Adrenal gland (tissue), 19 donors: ENCODE measurements at regions of chr10 and their contacts with region 1.

Region 1: DNA sequence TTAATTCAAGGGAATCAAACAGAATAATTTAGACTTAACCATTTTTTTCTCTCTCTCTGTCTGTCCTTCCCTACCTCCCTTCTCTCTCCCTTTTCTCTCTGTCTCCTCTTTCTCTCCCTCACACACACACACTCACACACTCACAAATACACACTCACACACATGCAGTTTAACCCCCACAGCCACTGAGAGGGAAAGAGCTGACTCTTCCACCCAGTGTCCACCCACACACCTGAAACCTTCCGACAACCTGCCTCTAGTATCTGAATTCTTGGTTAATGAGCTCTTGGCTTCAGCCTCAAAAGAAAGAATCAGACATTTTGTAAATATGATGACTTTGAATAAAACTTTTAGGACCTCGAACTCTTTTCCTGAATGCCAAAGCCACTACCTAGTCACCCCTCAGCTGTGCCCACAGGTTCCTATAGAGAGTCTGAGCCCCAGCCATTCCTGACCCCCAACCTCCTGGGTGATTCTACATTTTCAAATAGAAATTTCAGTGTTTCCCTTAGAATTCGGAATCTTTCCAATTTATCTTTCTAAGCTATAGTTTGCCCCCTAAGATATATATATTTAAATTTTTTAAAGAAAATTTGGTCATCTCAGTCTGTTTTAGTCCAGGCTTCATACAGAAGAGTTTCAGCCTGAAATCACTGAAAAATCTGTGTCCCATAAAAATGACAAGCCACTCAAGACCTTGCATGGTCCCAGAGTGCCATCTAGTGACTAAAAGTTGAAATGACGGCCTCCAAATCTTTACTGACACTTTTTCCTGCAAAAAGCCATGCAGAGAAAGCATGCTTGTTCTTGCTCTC is 202.8 kb downstream of the IPMK start:
- DNase-seq: peak in 5 of 7 donors; percentile 11 to 33 (median 32)
- H3K4me3 ChIP-seq: no peak overlapping the region
- H3K27ac ChIP-seq: no peak overlapping the region
- H3K4me1 ChIP-seq: no peaks in the 10 kb centered on the region
- H3K27me3 ChIP-seq: no peaks in the 10 kb centered on the region
- CTCF ChIP-seq: peak; percentile 56 to 91 (median 82)
- POLR2A ChIP-seq: no peak

Region 2: DNA sequence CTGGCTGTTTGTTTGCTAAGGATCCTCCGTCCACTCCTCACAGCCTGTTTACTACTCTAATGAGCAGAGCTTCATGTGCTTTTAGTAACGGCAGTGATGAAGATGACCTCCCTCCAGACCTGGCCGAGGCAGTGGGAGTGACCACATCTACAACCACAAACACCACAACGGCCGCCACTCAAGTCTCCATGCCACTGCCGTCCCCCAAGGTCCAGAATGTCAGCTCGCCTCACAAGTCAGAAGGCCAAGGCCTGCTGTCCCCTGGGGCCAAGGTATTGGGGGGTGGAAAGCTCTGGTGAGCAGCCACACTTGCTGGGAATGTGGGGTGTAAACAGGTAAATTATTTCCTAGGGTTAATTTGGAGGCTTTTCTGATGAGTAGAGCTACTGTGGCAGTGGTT is 723.6 kb before region 1 on chr10:
- intact Hi-C with region 1: loop called in 1 of 2 experiments (anchors 5 kb)
- DNase-seq: no peak
- H3K4me3 ChIP-seq: no peak overlapping the region
- H3K27ac ChIP-seq: no peak overlapping the region
- H3K4me1 ChIP-seq: no peaks in the 10 kb centered on the region
- H3K27me3 ChIP-seq: no peaks in the 10 kb centered on the region
- CTCF ChIP-seq: no peak
- POLR2A ChIP-seq: no peak

Region 3: GRCh38 chr10:57579926-57580325 is 485.0 kb before region 1 on chr10:
- intact Hi-C with region 1: loop called in 1 of 2 experiments (anchors 10 kb)
- DNase-seq: peak in 1 of 7 donors; percentile 23
- H3K4me3 ChIP-seq: no peak overlapping the region
- H3K27ac ChIP-seq: no peak overlapping the region
- H3K4me1 ChIP-seq: no peaks in the 10 kb centered on the region
- H3K27me3 ChIP-seq: no peaks in the 10 kb centered on the region
- CTCF ChIP-seq: peak in 5 of 6 experiments; percentile 22 to 57 (median 46)
- POLR2A ChIP-seq: no peak

Region 4: GRCh38 chr10:57716886-57717285 is 348.0 kb before region 1 on chr10:
- intact Hi-C with region 1: loop called in 1 of 2 experiments (anchors 5 kb)
- DNase-seq: no peak
- H3K4me3 ChIP-seq: no peak overlapping the region
- H3K27ac ChIP-seq: no peak overlapping the region
- H3K4me1 ChIP-seq: no peaks in the 10 kb centered on the region
- H3K27me3 ChIP-seq: no peaks in the 10 kb centered on the region
- CTCF ChIP-seq: peak in 5 of 6 experiments; percentile 27 to 47 (median 45)
- POLR2A ChIP-seq: no peak

Region 5: GRCh38 chr10:57874810-57875209 is 190.1 kb before region 1 on chr10:
- intact Hi-C with region 1: loop called in 1 of 2 experiments (anchors 10 kb)
- DNase-seq: no peak
- H3K4me3 ChIP-seq: no peak overlapping the region
- H3K27ac ChIP-seq: no peak overlapping the region
- H3K4me1 ChIP-seq: no peaks in the 10 kb centered on the region
- H3K27me3 ChIP-seq: no peaks in the 10 kb centered on the region
- CTCF ChIP-seq: no peak
- POLR2A ChIP-seq: no peak

Region 6: DNA sequence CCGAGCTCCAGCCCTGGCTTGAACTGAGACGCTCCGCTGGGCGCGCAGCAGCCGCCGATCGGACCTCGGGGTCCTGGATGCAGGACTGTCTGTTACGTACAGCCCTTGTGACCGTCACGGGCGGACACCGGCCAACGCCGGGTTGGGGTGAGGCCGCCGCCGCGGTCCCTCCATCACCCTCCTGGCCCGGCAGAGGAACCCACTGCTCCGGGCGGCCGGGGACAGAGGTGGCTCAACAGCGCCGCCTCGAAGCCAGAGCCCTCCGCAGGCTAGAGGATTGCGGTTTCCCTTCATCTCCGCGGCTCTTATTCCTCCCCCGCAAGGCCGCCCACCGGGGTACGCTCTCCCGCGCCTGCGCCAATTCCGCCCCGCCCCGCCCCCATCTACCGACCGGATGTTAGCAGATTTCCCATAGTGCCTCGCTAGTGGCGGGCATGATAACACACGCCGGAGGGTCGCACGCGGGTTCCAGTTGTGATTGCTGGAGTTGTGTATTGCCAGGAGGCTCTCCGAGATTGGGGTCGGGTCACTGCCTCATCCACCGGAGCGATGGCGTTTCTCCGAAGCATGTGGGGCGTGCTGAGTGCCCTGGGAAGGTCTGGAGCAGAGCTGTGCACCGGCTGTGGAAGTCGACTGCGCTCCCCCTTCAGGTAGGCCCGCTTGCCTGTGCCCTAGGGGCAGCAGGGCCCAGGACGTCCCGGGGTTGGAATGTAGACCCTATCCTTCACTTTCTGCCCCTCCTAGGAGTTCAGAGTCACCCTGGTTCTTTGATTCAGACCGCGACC is 320.3 kb after region 1 on chr10 and contains the start of gene TFAM:
- intact Hi-C with region 1: no loop called
- DNase-seq: peak; percentile 93 to 98 (median 97)
- H3K4me3 ChIP-seq: peak within 1 kb of the TSS; percentile 24 to 97 (median 76)
- H3K27ac ChIP-seq: peak within 1 kb of the TSS; percentile 60 to 93 (median 89)
- H3K4me1 ChIP-seq: peaks cover 0 to 26% of the 10 kb centered on the region in 2 donors
- H3K27me3 ChIP-seq: no peaks in the 10 kb centered on the region
- CTCF ChIP-seq: peak; percentile 22 to 67 (median 53)
- POLR2A ChIP-seq: peak; percentile 51 to 86
- total RNA-seq, gene TFAM: 16.2 to 55.7 (median 34.3) TPM